ENCODE measurements at regions of chr10 and their contacts with region 1.

Region 1: GRCh38 chr10:15439341-15439842 is 68.3 kb upstream of the FAM171A1 start:
- DNase-seq: no peak
- H3K4me3 ChIP-seq: peak overlapping the region; percentile 43
- CTCF ChIP-seq: peak; percentile 59

Region 2: DNA sequence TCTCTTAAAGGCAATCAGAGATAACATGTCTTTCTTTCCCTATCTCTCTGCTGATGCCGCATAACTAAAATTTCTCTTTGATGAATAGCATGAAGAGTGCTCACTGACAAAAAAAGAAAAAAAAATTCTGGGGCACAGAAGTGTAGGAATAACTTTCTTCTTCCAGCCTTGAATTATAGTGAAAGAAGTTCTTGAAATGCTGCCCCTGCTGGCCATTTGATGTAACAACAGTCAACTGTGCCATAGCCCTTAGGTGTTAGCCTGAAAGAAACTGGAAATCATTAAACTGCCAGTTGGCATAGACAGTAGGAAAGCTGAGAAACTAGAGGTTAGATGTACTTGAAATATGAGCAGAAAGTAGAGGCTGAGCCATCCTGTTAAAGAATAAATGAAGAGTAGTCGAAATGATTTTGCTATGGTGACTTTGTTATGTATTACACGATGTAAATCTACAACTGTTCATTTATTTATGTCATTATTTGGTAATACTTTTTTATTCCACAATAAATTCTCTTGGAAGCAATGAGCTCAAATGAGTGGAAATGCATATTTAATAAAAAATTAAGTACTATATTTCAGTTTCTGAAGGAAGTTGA is 20.0 kb before region 1 on chr10:
- CTCF ChIA-PET with region 1: interaction called, 10 read pairs
- POLR2A ChIA-PET with region 1: no interaction called
- DNase-seq: no peak
- H3K4me3 ChIP-seq: no peak overlapping the region
- CTCF ChIP-seq: peak; percentile 58

Region 3: DNA sequence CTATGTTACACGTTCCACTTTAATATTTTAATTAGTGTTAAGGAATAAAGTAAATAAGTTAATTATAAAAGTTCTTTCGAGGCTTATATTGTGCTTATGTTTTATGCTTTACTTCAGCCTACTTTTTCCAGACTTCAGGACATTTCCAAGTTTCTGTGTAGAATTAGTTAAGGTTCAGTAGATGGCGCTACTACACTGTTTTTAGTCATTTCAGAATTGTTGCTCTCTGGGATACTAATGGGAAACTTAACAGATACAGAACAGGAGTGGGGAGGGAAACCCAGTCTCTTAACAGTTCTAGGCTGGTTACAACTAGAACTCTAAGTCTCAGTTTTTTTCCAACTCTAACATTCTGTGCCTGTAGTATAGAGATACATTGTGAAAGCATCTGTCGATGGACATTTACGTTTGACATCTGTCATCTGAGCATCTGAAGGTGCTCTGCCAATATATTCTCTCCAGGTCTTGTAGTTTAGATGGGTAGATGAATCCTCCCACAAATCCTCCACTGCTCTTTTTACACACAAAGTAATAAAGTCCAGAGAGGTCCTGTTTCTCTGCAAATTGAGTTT is 11.5 kb before region 1 on chr10:
- CTCF ChIA-PET with region 1: interaction called, 37 read pairs
- POLR2A ChIA-PET with region 1: no interaction called
- DNase-seq: no peak
- H3K4me3 ChIP-seq: no peak overlapping the region
- CTCF ChIP-seq: peak; percentile 29

Region 4: DNA sequence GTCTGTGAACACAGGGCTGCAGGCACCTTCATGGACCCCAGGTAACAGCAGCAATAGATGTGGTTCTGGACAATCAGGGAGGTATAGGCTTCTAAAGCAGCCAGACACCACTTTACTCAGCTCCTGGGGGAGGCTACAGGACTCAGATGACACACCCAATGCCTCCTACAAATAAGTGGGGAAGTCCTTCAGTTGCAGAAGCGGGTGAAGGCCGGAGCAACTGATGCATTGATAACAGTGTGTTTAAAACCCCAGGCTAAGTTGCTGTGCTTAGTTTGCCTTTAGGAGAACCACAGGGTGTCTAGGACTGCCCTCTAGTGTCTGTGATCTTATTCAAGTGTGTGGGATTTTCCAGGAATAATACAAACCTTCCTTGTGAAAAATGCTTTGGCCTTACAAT is 286.2 kb after region 1 on chr10:
- CTCF ChIA-PET with region 1: interaction called, 296 read pairs
- POLR2A ChIA-PET with region 1: no interaction called
- DNase-seq: no peak
- H3K4me3 ChIP-seq: no peak overlapping the region
- CTCF ChIP-seq: peak; percentile 58

Measured in AG04449 (cell line).